SK-N-SH (cell line): ENCODE measurements at regions of chr10 and their contacts with region 1.

Region 1: DNA sequence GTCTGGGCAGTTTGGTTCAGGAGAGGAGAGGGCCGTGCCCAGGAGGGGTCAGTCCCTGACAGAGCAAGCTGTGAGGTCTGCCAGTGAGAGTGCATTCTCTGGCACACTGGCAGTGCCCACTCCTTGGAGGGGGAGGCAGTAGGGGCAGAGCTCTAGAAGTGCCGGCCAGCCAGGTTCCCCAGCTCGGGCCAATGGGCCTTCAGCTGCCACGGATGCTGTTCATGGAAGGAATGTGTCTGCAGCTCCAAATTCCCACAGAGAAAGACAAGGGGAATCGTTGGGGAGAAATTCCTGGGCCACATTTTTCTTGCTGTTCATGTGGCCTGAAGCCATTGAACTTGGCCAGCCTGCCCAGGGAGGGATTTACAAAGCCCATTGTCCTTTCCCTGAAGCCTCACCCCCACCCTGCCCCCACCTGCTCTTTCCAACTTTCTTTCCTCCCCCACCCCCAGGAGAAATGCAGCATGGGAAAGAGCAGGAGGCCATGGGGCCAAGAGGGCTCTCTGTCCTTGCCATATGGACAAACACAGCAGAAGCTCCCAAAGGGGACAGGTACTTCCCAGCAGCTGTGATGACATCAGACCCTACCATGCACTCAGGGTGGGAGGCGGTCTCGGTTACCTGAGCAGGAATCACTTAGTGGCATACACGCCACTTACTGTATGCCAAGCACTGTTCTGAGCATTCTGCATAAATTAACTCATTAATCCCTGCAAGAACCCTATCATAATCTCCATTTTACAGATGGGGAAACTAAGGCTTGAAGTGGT is 70.7 kb downstream of the ARHGAP22 start:
- DNase-seq: no peak
- H3K4me3 ChIP-seq: no peak overlapping the region
- H3K27ac ChIP-seq: no peak overlapping the region
- H3K4me1 ChIP-seq: no peaks in the 10 kb centered on the region; a peak in 1 of 4 replicates
- H3K27me3 ChIP-seq: no peaks in the 10 kb centered on the region
- CTCF ChIP-seq: no peak
- EP300 ChIP-seq: no peak
- RAD21 ChIP-seq: no peak

Region 2: GRCh38 chr10:48523820-48524758 is 10.0 kb before region 1 on chr10:
- CTCF ChIA-PET with region 1: interaction called, 14 read pairs
- POLR2A ChIA-PET with region 1: no interaction called
- DNase-seq: peak; percentile 95
- H3K4me3 ChIP-seq: peak overlapping the region; percentile 59 to 65
- H3K27ac ChIP-seq: peak overlapping the region in 1 of 2 experiments; percentile 42; a peak in 2 of 4 replicates
- H3K4me1 ChIP-seq: peaks cover 23 to 28% of the 10 kb centered on the region in 2 experiments; a peak in 3 of 4 replicates
- H3K27me3 ChIP-seq: no peaks in the 10 kb centered on the region
- CTCF ChIP-seq: peak; percentile 69
- EP300 ChIP-seq: no peak
- RAD21 ChIP-seq: peak; percentile 43